Astrocyte of the cerebellum (primary cell): ENCODE measurements at regions of chr16 and their contacts with region 1.

Region 1: DNA sequence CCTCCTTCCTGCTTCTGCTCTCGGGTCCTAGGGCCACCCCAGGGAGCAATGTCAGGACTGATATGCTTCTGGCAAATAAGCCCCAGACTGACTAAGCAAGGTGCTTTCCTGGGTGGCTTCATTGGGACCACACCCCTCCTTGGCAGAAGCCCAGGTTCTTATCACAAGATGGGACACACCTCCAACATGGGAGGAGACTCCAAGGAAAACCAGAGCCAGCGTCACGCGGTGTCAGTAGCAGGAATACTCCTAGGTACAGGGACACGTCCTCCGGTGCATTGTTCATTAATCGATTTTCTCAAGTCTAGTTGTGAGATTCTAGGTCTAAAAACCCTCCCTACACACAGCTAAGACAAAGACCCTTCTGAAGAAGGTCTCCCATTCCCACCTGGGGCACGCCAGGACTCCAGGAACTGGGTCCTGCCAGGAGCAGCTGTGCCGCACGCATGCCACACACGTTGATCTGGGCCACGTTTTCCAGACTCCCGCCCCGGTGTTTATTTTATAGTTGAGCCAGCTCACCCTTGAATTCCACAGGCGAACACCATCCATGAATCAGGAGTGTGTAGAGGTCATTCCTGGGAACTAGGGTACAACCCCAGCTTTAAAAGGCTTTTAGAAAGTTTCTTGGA is 30.8 kb downstream of the FA2H start:
- DNase-seq: no peak
- H3K4me3 ChIP-seq: no peak overlapping the region
- CTCF ChIP-seq: no peak

Region 2: DNA sequence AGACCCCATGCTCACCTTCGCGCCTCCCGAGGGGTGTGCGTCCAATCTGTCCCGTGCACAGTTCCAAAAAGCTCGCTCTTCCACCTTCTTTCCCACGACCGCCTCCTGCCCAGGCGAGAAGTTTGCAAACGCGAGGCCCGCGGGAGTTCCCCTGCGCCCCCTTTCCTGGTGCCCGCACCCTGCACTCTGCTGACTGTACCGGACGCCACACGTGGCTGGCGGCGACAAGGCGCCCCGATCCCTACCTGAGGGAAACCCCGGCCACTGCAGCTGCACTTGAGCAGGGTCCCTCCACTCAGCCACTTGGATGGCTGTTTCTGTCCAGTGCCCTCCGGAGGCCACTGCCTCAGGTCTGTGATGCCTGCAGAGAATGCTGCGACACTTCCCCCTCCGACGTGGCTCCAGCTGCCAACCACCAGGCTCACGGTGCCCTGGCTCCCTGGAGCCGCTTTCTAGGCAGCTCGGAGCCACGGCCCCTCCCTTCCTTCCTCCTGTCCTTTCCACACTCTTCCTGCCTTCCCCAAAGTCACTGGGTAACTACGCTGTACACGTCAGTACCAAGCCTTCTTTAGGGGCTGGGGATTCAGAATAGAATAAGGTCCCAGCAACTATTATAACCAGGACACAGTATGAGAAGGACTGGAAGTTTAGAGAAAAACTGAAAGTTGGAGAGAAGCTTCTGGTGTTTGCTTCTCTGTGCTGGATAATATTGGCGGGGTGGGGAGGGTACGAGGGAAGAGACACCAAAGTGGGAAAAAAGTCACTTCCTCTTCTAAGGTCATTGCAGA is 43.2 kb before region 1 on chr16 and contains the start of gene MLKL:
- in situ Hi-C with region 1: no loop called
- DNase-seq: no peak
- H3K4me3 ChIP-seq: peak within 1 kb of the TSS; percentile 69
- CTCF ChIP-seq: no peak

Region 3: GRCh38 chr16:74795104-74795503 is 51.3 kb after region 1 on chr16:
- in situ Hi-C with region 1: loop called (anchors 5 kb)
- DNase-seq: no peak
- H3K4me3 ChIP-seq: no peak overlapping the region
- CTCF ChIP-seq: no peak

Region 4: DNA sequence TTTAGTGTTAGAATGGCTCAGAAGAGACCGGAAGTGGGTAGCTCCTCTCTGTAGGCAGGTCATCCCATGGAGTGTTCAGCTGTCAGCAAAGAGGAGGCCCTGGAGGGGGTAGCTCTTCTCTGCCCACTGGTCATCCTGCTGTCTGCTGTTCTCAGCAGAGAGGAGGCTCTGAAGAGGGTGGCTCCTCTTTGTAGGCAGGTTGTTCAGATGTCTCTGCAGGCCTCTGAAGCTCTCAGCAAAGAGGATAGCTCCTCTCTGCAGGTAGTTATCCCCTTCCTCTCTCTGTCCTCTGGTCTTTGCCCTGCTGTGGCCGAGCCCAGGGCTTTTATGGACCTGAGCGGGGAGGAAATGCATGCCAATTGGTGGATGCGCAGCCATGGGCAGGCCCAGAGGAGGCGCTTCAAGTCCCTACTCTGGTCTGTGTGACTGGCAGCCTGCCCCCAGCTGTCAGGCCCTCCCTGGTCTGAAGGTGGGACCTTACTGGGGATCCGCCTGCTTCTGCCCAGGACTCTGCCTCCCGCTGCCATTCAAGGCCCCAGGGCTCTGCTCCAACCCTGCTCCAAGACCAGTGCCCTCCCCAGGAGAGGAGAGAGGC is 63.4 kb after region 1 on chr16:
- in situ Hi-C with region 1: no loop called
- DNase-seq: no peak
- H3K4me3 ChIP-seq: no peak overlapping the region
- CTCF ChIP-seq: no peak

Region 5: DNA sequence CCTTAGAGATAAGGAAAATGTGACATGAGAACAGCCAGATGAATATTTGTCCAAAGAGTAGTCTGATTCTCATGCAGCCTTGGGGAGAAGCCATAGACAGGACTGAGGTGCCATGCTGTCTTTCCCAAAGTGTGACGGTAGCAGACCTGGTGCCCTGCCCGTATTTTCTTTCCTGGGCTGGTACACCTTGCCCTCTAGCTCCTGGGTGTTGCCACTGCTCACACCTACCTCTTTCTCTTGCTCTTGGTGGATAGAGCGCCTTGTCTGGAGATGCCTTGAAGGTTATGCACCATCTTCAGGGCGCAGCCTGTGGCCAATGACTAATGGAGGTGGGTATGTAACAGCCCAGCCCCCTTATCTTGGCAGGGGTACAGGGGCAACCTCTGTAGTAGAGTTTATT is 77.2 kb after region 1 on chr16:
- in situ Hi-C with region 1: loop called (anchors 5 kb)
- DNase-seq: no peak
- H3K4me3 ChIP-seq: no peak overlapping the region
- CTCF ChIP-seq: no peak